ENCODE measurements at regions of chr14 and their contacts with region 1.

Region 1: DNA sequence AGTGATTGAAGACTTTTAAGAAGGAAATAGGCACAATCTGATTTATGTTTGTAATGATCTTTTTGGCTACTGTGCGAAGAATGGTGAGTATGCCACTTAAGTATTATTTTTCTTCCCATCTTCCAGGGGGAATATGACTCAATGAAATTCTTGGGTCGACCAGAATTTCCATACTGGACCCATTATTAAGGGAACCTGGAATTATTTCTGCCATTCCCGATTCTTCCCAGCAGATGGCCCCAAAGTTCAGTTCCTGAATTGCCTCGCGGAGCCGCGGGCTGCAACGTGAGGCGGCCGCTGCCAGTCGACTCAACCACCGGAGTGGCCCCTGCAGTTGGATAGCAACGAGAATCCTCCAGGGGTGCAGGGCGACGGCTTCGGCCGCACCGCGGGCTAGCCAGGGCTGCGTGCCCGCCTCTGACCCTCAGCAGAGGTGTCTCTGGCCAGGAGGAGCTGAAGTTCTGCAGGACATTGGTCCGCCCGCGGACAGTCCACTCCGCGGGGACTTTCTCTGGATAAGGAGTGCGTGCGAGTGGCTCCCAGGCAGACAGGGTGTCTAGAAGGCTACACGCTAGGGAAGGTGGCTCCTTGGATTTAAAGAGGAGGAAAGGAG is 628 bp upstream of the TSHR start:
- DNase-seq: peak; percentile 65 to 77 (median 72)
- H3K4me3 ChIP-seq: peak overlapping the region; percentile 72 to 92
- H3K4me3 Mint-ChIP-seq: peak overlapping the region; percentile 77 to 96 (median 88)
- H3K27ac ChIP-seq: no peak overlapping the region
- H3K27ac Mint-ChIP-seq: peak overlapping the region; percentile 12 to 72 (median 60)
- H3K4me1 ChIP-seq: peaks cover 35% of the 10 kb centered on the region
- H3K4me1 Mint-ChIP-seq: peaks cover 27 to 41% (median 33%) of the 10 kb centered on the region in 4 donors
- H3K27me3 ChIP-seq: no peaks in the 10 kb centered on the region
- H3K27me3 Mint-ChIP-seq: no peaks in the 10 kb centered on the region

Region 2: GRCh38 chr14:80941241-80942182 is 13.3 kb before region 1 on chr14 and contains the start of gene CEP128:
- CTCF ChIA-PET with region 1: interaction called, 23 read pairs
- POLR2A ChIA-PET with region 1: interaction called, 14 read pairs
- intact Hi-C with region 1: no loop called
- DNase-seq: peak; percentile 77 to 84 (median 82)
- H3K4me3 ChIP-seq: peak within 1 kb of the TSS; percentile 64 to 75
- H3K4me3 Mint-ChIP-seq: peak within 1 kb of the TSS; percentile 89 to 95 (median 92)
- H3K27ac ChIP-seq: peak within 1 kb of the TSS; percentile 80
- H3K27ac Mint-ChIP-seq: peak within 1 kb of the TSS; percentile 82 to 96 (median 93)
- H3K4me1 ChIP-seq: peaks cover 30% of the 10 kb centered on the region
- H3K4me1 Mint-ChIP-seq: peaks cover 19 to 34% (median 25%) of the 10 kb centered on the region in 4 donors
- H3K27me3 ChIP-seq: no peaks in the 10 kb centered on the region
- H3K27me3 Mint-ChIP-seq: no peaks in the 10 kb centered on the region
- total RNA-seq, gene CEP128: 20.1 to 21.6 TPM

Region 3: GRCh38 chr14:80987235-80988032 is 32.6 kb after region 1 on chr14:
- CTCF ChIA-PET with region 1: interaction called, 285 read pairs
- POLR2A ChIA-PET with region 1: interaction called, 20 read pairs
- intact Hi-C with region 1: loop called (anchors 1 kb)
- DNase-seq: peak; percentile 62 to 71 (median 68)
- H3K4me3 ChIP-seq: no peak overlapping the region
- H3K4me3 Mint-ChIP-seq: no peak overlapping the region
- H3K27ac ChIP-seq: no peak overlapping the region
- H3K27ac Mint-ChIP-seq: no peak overlapping the region
- H3K4me1 ChIP-seq: no peaks in the 10 kb centered on the region
- H3K4me1 Mint-ChIP-seq: no peaks in the 10 kb centered on the region
- H3K27me3 ChIP-seq: no peaks in the 10 kb centered on the region
- H3K27me3 Mint-ChIP-seq: peaks cover 2 to 9% of the 10 kb centered on the region in 2 donors

Region 4: GRCh38 chr14:81170104-81170828 is 215.5 kb after region 1 on chr14:
- CTCF ChIA-PET with region 1: interaction called, 17 read pairs
- POLR2A ChIA-PET with region 1: interaction called, 6 read pairs
- intact Hi-C with region 1: loop called (anchors 1 kb)
- DNase-seq: peak; percentile 90 to 92 (median 91)
- H3K4me3 ChIP-seq: peak overlapping the region; percentile 47 to 94
- H3K4me3 Mint-ChIP-seq: peak overlapping the region; percentile 89 to 96 (median 92)
- H3K27ac ChIP-seq: peak overlapping the region; percentile 55
- H3K27ac Mint-ChIP-seq: peak overlapping the region; percentile 81 to 98 (median 94)
- H3K4me1 ChIP-seq: peaks cover 16% of the 10 kb centered on the region
- H3K4me1 Mint-ChIP-seq: peaks cover 16 to 30% (median 22%) of the 10 kb centered on the region in 4 donors
- H3K27me3 ChIP-seq: no peaks in the 10 kb centered on the region
- H3K27me3 Mint-ChIP-seq: no peaks in the 10 kb centered on the region

Region 5: DNA sequence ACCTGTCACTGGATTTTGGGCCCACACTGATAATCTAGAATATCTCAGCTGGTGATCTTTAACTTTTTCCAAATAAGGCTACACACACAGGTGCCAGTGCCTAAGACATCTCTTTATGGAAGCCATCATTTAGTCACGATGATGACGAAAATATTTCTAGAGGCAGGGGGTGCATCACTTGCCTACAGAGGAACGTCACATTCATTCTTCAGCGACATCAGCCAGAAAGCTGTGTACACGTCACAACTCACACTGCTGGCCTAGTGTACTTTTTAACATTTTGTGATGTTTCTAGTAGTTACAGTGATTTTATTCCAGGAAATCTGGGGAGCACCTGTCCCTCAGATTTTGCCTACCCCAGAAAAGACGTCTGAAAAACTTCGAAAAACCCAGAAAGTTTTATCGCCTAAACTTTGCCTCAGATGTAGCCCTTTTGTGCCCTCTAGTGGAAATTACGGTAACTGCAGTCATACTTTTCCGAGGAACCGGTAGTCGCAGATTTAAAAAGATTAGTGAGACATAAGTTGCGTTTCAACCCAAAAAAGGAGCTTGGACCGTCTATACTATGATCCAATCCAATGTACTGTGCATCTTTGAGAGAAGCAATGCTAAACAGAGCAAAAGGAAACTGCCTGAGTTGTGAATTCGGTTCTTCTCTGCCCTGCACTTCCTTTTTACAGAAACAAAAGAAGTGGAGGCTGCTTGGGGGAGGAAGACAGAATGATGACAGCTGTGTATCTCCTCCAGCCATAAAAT is 509.6 kb after region 1 on chr14:
- CTCF ChIA-PET with region 1: interaction called, 4 read pairs
- POLR2A ChIA-PET with region 1: no interaction called
- intact Hi-C with region 1: loop called (anchors 2 kb)
- DNase-seq: peak; percentile 59 to 79 (median 77)
- H3K4me3 ChIP-seq: peak overlapping the region; percentile 51 to 67
- H3K4me3 Mint-ChIP-seq: peak overlapping the region; percentile 84 to 89 (median 84)
- H3K27ac ChIP-seq: peak overlapping the region; percentile 60
- H3K27ac Mint-ChIP-seq: peak overlapping the region; percentile 68 to 91 (median 86)
- H3K4me1 ChIP-seq: no peaks in the 10 kb centered on the region
- H3K4me1 Mint-ChIP-seq: peaks cover 0 to 9% (median 4%) of the 10 kb centered on the region in 4 donors
- H3K27me3 ChIP-seq: no peaks in the 10 kb centered on the region
- H3K27me3 Mint-ChIP-seq: peaks cover 0 to under 1% of the 10 kb centered on the region in 2 donors

Measured in CD4-positive, alpha-beta memory T cell (primary cell).